Activated CD4-positive, alpha-beta memory T cell treated with anti-CD3 and anti-CD28 coated beads, Interleukin-2, amount 10 ng/mL, durations not matched to agents 7 days and 5 days (primary cell): ENCODE measurements at regions of chr10 and their contacts with region 1.

Region 1: DNA sequence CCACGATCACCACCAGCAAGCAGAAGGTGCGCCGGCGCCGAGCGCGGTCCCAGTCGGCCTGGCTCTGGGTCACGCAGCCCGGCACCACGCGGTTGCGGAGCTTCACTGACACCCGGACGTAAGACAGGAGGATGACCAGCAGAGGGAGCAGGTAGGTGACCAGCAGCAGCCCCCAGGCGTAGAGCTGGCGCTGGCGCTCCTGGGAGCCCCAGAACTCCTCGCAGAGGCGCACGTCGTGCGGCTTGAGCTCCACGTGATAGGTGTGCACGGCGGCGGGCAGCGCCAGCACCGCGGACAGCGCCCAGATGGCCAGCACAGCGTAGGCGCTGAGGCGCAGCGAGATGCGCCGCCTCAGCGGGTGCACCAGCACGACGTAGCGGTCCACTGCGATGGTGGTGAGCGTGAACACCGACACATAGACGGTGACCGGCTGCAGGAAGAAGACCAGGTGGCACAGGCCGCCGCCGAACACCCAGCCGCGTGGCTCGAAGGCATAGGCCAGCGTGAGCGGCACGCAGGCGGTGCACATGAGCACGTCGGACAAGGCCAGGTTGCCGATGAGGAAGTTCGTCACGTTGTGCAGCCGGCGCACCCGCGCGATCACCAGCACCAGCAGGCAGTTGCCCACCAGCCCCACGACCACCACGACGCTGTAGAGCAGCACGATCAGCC is 920 bp downstream of the PRLHR start:
- DNase-seq: peak; percentile 17
- H3K4me3 Mint-ChIP-seq: no peak overlapping the region
- H3K27ac Mint-ChIP-seq: no peak overlapping the region
- H3K4me1 Mint-ChIP-seq: no peaks in the 10 kb centered on the region
- H3K27me3 Mint-ChIP-seq: peaks cover 50% of the 10 kb centered on the region

Region 2: GRCh38 chr10:118720685-118721538 is 126.4 kb after region 1 on chr10:
- CTCF ChIA-PET with region 1: interaction called, 15 read pairs
- POLR2A ChIA-PET with region 1: no interaction called
- DNase-seq: peak; percentile 55
- H3K4me3 Mint-ChIP-seq: no peak overlapping the region
- H3K27ac Mint-ChIP-seq: no peak overlapping the region
- H3K4me1 Mint-ChIP-seq: peaks cover 3% of the 10 kb centered on the region
- H3K27me3 Mint-ChIP-seq: no peaks in the 10 kb centered on the region